Naive thymus-derived CD4-positive, alpha-beta T cell (primary cell): ENCODE measurements at regions of chr10 and their contacts with region 1.

Region 1: GRCh38 chr10:5813287-5814109 is at the start of gene GDI2:
- DNase-seq: peak; percentile 94 to 98 (median 97)
- ATAC-seq: peak; percentile 98
- H3K4me3 ChIP-seq: peak within 1 kb of the TSS; percentile 86
- H3K4me3 Mint-ChIP-seq: peak within 1 kb of the TSS; percentile 85 to 95 (median 93)
- H3K27ac ChIP-seq: peak within 1 kb of the TSS; percentile 99
- H3K27ac Mint-ChIP-seq: peak within 1 kb of the TSS; percentile 85 to 98 (median 95)
- H3K4me1 ChIP-seq: peaks cover 27 to 37% of the 10 kb centered on the region in 2 donors
- H3K4me1 Mint-ChIP-seq: peaks cover 49 to 71% (median 67%) of the 10 kb centered on the region in 7 donors
- H3K27me3 ChIP-seq: no peaks in the 10 kb centered on the region
- H3K27me3 Mint-ChIP-seq: no peaks in the 10 kb centered on the region
- total RNA-seq, gene GDI2: 85.3 to 236 (median 121) TPM

Region 2: DNA sequence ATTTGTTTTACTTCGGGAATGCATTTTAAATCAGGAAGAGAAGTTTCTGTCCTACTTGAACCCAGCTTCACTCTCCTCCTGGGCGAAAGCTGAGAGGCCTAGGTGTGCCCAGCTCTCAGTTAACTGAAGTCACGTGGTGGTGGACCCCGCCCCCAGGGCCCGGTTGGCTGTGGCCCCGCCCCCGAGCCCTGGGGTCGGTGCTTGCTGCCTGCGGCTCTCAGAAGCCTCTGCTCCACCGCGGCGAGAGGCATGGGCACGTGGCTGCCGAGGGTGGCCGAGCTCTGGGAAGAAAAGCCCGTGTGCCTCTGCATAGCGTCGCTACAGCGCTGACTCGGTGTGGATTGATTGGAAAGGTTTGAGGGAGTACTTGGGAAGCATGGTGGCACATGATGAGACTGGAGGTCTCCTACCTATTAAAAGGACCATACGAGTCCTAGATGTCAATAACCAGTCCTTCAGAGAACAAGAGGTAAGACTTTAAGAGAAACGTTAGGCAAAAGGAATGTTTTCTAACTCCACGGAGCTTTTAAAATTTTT is 367.0 kb before region 1 on chr10:
- CTCF ChIA-PET with region 1: no interaction called
- POLR2A ChIA-PET with region 1: interaction called, 3 read pairs
- intact Hi-C with region 1: loop called (anchors 5 to 10 kb)
- DNase-seq: peak; percentile 77 to 88 (median 86)
- ATAC-seq: peak; percentile 93
- H3K4me3 ChIP-seq: peak overlapping the region; percentile 79
- H3K4me3 Mint-ChIP-seq: peak overlapping the region; percentile 92 to 100 (median 96)
- H3K27ac ChIP-seq: peak overlapping the region; percentile 78
- H3K27ac Mint-ChIP-seq: peak overlapping the region; percentile 82 to 97 (median 92)
- H3K4me1 ChIP-seq: peaks cover 0 to 24% of the 10 kb centered on the region in 2 donors
- H3K4me1 Mint-ChIP-seq: peaks cover 16 to 78% (median 62%) of the 10 kb centered on the region in 7 donors
- H3K27me3 ChIP-seq: no peaks in the 10 kb centered on the region
- H3K27me3 Mint-ChIP-seq: no peaks in the 10 kb centered on the region

Region 3: DNA sequence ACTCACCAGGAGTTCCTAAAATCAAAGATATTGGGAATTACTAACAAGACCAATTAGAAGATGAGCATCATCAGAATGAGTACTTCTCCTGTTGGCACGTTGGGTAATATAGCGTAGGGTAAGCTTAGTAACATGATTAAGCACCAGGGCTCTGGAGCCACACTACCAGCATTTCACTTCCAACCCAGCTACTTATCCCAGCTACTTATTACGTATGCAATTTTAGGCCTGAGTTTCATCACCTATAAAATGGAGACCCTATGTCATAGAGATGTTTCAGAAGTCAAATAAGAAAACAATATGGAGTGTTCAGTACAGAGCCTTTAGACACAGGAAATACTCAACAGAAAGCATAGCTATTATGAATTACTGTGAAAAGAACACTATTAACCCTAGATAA is 19.3 kb before region 1 on chr10:
- CTCF ChIA-PET with region 1: no interaction called
- POLR2A ChIA-PET with region 1: interaction called, 7 read pairs
- intact Hi-C with region 1: loop called in 1 of 2 experiments (anchors 2 kb)
- DNase-seq: no peak
- ATAC-seq: no peak
- H3K4me3 ChIP-seq: no peak overlapping the region
- H3K4me3 Mint-ChIP-seq: no peak overlapping the region
- H3K27ac ChIP-seq: no peak overlapping the region
- H3K27ac Mint-ChIP-seq: peak overlapping the region in 6 of 9 donors; percentile 12 to 59 (median 21)
- H3K4me1 ChIP-seq: no peaks in the 10 kb centered on the region
- H3K4me1 Mint-ChIP-seq: peaks cover under 1 to 29% (median 6%) of the 10 kb centered on the region in 7 donors
- H3K27me3 ChIP-seq: no peaks in the 10 kb centered on the region
- H3K27me3 Mint-ChIP-seq: no peaks in the 10 kb centered on the region

Region 4: DNA sequence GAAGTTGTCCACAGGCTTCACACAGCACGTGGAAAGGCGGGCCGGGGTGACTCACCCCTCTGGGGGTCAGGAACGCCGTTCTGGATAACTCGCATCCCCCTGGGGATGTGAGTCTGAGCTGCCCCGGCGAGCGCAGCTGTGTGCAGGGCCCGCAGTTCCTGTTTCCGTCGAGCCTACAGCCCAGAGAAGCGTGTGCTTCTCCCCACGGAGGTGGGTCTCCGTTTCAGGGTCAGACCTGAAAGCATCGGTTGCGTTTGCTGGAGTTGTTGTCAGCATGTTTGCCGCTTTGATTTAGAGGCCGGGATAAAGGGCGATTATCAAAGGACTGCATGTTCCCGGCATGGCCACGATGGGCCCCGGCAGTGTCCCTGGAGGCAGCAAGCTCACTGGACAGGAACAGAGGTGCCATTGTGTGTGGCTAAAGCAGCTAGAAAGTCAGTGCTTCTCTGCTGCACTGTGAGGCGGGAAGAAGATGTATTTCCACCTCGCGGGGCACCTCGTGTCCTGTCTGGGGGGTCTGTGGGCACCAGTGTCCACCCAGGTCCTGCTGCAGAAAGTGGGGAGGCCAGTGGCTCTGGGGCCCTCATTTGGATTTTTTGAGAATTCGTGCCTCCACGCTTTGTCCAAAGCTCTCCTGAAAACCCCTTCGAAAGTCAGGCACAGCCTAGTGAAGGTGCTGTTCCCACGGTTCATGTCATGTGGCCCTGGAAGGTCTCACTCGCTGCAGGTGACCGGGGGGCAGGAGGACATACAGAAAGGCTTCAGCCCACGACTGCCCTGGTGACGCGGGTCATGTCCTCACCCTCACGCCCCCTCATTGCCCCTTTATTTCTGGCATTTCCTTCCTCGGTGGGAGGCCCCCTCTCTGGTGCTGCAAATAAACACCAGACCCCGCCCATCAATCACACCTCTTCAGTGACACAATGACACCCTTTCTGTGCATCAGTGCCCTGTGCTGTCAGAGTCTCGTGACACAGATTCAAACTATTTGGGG is 27.1 kb after region 1 on chr10:
- CTCF ChIA-PET with region 1: no interaction called
- POLR2A ChIA-PET with region 1: no interaction called
- intact Hi-C with region 1: no loop called
- DNase-seq: no peak
- ATAC-seq: peak; percentile 68
- H3K4me3 ChIP-seq: no peak overlapping the region
- H3K4me3 Mint-ChIP-seq: no peak overlapping the region
- H3K27ac ChIP-seq: no peak overlapping the region
- H3K27ac Mint-ChIP-seq: no peak overlapping the region
- H3K4me1 ChIP-seq: no peaks in the 10 kb centered on the region
- H3K4me1 Mint-ChIP-seq: peaks cover 0 to 5% (median 0%) of the 10 kb centered on the region in 7 donors
- H3K27me3 ChIP-seq: no peaks in the 10 kb centered on the region
- H3K27me3 Mint-ChIP-seq: peaks cover 0 to 5% (median 0%) of the 10 kb centered on the region in 5 donors

Region 5: DNA sequence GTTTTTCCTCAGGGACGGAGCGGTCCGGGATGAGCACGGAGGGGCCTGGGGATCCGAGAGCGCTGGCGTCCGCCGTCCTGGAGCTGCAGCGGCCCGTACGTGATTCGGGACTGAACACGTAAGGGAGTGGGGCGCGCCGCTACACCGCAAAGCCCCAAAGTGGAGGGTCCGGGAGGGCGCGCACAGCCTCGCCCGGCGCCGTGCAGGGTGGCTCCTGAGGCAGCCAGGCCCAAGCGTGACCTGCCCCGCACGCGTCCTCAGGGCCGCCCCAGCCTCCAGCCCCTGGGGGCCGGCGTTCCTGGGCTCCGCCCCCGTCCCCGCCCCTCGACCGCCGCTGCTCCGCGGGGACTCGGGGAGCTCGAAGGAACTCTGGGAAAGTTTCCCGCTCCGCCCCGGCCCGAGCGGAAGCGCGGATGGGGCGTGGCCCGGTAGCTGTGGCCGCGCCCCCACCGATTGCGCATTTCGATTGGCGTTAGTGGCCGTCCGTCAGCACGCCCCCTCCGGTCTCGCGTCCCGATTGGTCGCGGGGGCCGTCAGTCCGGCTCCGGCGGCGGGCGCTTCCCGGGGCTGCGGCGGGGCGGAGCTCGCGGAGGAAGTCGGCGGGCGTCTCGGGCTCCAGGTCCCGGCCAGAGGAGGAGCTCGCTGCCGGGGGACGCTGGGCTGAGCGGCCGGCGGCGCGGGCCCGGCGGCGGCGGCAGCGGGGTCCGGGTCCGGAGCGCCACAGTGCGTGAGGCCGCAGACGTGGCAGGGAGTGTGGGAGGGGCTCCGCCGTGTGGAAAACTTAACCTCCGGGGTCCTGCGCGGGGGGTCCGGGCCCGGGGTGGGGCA is 76.3 kb after region 1 on chr10 and contains the starts of genes ANKRD16 and FBH1:
- CTCF ChIA-PET with region 1: no interaction called
- POLR2A ChIA-PET with region 1: interaction called, 18 read pairs
- intact Hi-C with region 1: loop called (anchors 1 kb)
- DNase-seq: peak; percentile 94 to 100 (median 96)
- ATAC-seq: peak; percentile 96
- H3K4me3 ChIP-seq: peak within 1 kb of the TSS; percentile 70
- H3K4me3 Mint-ChIP-seq: peak within 1 kb of the TSS; percentile 90 to 97 (median 94)
- H3K27ac ChIP-seq: peak within 1 kb of the TSS; percentile 81
- H3K27ac Mint-ChIP-seq: peak within 1 kb of the TSS; percentile 80 to 94 (median 87)
- H3K4me1 ChIP-seq: peaks cover 12% of the 10 kb centered on the region in 2 donors
- H3K4me1 Mint-ChIP-seq: peaks cover 34 to 64% (median 60%) of the 10 kb centered on the region in 7 donors
- H3K27me3 ChIP-seq: no peaks in the 10 kb centered on the region
- H3K27me3 Mint-ChIP-seq: no peaks in the 10 kb centered on the region
- total RNA-seq, gene ANKRD16: 4.6 to 9.8 (median 7.2) TPM
- total RNA-seq, gene FBH1: 64.8 to 105 (median 78.6) TPM

Region 6: DNA sequence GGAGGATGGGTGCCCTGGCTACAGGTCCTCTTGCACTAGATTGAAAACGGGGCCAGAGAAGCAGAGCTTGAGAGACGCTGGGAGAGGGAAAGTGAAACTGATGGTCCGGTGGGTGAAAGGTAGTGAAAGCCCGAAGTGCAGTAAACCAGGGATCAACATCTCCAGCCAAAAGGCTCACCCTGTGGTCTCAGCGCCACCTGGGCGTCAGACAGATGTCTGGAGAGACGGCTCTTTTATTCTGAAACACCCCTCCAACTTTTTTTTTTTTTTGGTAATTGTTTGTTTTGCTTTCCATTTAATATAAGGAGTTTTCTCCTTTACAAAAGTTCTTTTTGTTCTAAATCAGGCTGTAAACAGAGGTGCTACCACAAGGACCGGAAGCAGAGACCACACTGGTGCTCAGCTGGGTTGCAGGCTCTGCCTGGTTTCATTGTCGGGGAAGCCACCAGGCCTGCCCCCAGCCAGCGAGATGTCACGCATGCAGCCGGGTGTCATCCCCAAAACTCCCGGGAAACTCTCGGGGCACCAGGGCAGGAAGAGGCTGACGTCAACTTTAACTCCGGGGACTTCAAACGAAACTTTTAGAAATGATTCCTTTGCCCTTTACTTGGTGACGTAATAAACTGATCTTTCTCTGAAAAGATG is 237.4 kb after region 1 on chr10:
- CTCF ChIA-PET with region 1: no interaction called
- POLR2A ChIA-PET with region 1: interaction called, 3 read pairs
- intact Hi-C with region 1: loop called in 1 of 2 experiments (anchors 10 kb)
- DNase-seq: peak; percentile 62 to 98 (median 90)
- ATAC-seq: peak; percentile 92
- H3K4me3 ChIP-seq: peak overlapping the region; percentile 49
- H3K4me3 Mint-ChIP-seq: peak overlapping the region; percentile 78 to 98 (median 92)
- H3K27ac ChIP-seq: peak overlapping the region; percentile 79
- H3K27ac Mint-ChIP-seq: peak overlapping the region; percentile 94 to 99 (median 97)
- H3K4me1 ChIP-seq: peaks cover 52 to 54% of the 10 kb centered on the region in 2 donors
- H3K4me1 Mint-ChIP-seq: peaks cover 54 to 90% (median 85%) of the 10 kb centered on the region in 7 donors
- H3K27me3 ChIP-seq: no peaks in the 10 kb centered on the region
- H3K27me3 Mint-ChIP-seq: no peaks in the 10 kb centered on the region

Region 7: DNA sequence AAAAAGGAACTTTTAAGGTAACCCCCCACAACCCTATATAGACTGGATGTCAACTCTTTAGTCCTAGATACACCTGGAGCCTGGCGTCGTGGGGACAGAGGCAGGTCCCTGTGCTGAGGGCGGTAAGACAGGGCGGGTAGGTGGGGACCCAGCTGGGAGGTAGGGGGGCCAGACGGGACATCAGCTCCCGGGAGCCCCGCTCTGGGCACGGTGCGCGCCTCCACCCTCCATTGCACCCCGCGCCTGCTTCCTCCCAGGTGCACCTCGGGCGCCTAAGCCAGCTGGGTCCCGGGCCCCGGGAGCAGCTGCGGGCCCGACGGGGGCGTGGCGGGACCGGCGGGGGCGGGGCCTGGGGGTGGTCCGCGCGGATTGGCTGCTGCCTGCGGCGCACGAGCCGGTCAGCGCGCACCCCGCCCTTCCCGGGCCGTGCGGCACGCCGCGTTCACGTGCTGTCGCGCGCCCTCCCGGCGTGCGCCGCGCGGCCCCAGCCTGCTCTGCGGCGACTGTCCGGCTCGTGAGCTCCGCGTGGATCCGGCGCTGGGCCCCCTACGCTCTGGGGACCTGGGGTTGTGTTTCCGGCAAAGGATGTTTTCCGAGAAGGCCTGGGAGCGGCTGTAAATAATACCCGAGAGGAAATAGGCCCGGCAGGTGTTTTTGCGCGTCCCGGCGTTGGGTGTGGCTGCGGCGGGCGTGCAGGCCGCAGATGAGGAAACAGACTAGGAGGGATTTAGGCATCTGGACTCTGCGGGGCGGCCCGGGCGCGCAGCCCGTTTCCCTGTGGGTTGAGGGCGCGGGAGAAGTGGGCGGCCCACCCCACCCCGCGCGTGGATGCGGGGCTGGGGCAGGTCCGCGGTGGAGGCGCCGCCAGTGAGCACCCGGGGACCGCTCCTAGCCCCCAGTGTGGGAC is 350.1 kb after region 1 on chr10:
- CTCF ChIA-PET with region 1: no interaction called
- POLR2A ChIA-PET with region 1: no interaction called
- intact Hi-C with region 1: loop called in 1 of 2 experiments (anchors 5 kb)
- DNase-seq: peak; percentile 89 to 95 (median 94)
- ATAC-seq: peak; percentile 96
- H3K4me3 ChIP-seq: peak overlapping the region; percentile 81
- H3K4me3 Mint-ChIP-seq: peak overlapping the region; percentile 85 to 95 (median 92)
- H3K27ac ChIP-seq: peak overlapping the region; percentile 95
- H3K27ac Mint-ChIP-seq: peak overlapping the region; percentile 91 to 99 (median 97)
- H3K4me1 ChIP-seq: peaks cover 25 to 33% of the 10 kb centered on the region in 2 donors
- H3K4me1 Mint-ChIP-seq: peaks cover 30 to 64% (median 57%) of the 10 kb centered on the region in 7 donors
- H3K27me3 ChIP-seq: no peaks in the 10 kb centered on the region
- H3K27me3 Mint-ChIP-seq: no peaks in the 10 kb centered on the region